K562 (cell line): ENCODE measurements at regions of chr3 and their contacts with region 1.

Region 1: GRCh38 chr3:137946345-137946973 is 63.5 kb upstream of the CLDN18 start:
- DNase-seq: peak; percentile 70 to 75 (median 71)
- ATAC-seq: peak; percentile 86
- H3K4me3 ChIP-seq: no peak overlapping the region
- H3K27ac ChIP-seq: no peak overlapping the region
- H3K4me1 ChIP-seq: no peaks in the 10 kb centered on the region
- H3K27me3 ChIP-seq: no peaks in the 10 kb centered on the region
- CTCF ChIP-seq: peak; percentile 55 to 70 (median 63); a peak in 5 of 6 replicates
- EP300 ChIP-seq: no peak
- POLR2A ChIP-seq: no peak
- RAD21 ChIP-seq: peak; percentile 59 to 74; a peak in 3 of 4 replicates

Region 2: DNA sequence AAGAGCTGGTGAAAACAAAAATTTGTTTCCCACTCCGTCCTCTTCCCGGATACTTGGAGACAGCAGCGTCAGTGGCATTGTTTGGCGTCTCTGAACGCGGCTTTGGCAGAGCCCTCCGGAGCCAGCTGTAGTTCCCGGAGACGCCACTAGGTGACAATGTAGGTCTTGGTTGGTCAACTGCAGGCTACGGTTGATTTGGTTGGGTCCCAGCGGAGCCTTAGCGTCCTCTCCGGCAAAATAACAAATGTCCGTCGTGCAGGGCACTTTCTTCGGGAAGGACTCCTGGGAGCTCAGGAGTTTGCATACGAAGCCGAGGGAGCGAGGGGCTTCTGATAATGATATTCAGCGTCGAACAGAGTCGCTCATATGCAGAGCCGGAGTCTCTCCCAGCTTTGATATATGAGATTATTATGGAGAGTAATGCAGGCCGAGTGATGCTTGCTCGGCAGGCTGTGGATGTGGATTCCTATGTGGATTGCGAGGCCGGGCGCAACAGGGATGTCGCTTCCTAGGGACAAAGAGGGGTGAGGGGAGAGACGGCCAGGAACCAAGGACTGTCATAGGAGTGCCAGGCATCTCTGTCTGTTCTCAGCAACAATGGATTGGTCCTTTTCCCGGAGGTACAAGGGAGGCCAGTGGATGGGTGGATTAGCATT is 913.9 kb before region 1 on chr3:
- CTCF ChIA-PET with region 1: no interaction called
- POLR2A ChIA-PET with region 1: no interaction called
- in situ Hi-C with region 1: no loop called
- intact Hi-C with region 1: loop called (anchors 2 kb)
- DNase-seq: peak; percentile 72 to 77 (median 75)
- ATAC-seq: peak; percentile 90
- H3K4me3 ChIP-seq: no peak overlapping the region
- H3K27ac ChIP-seq: no peak overlapping the region
- H3K4me1 ChIP-seq: peaks cover 0 to 3% of the 10 kb centered on the region in 2 experiments; a peak in 3 of 5 replicates
- H3K27me3 ChIP-seq: peaks cover 3 to 11% of the 10 kb centered on the region in 2 experiments; a peak in 3 of 5 replicates
- CTCF ChIP-seq: peak; percentile 74 to 89 (median 79)
- EP300 ChIP-seq: no peak
- POLR2A ChIP-seq: no peak
- RAD21 ChIP-seq: peak; percentile 41 to 60

Region 3: GRCh38 chr3:137105277-137105977 is 841.0 kb before region 1 on chr3:
- CTCF ChIA-PET with region 1: no interaction called
- POLR2A ChIA-PET with region 1: no interaction called
- in situ Hi-C with region 1: loop called (anchors 25 kb)
- intact Hi-C with region 1: loop called (anchors 5 kb)
- DNase-seq: peak; percentile 17 to 57 (median 20)
- ATAC-seq: peak; percentile 84
- H3K4me3 ChIP-seq: no peak overlapping the region
- H3K27ac ChIP-seq: no peak overlapping the region
- H3K4me1 ChIP-seq: no peaks in the 10 kb centered on the region
- H3K27me3 ChIP-seq: no peaks in the 10 kb centered on the region
- CTCF ChIP-seq: peak; percentile 42 to 65 (median 53); a peak in 4 of 6 replicates
- EP300 ChIP-seq: no peak
- POLR2A ChIP-seq: no peak
- RAD21 ChIP-seq: peak; percentile 42 to 66

Region 4: GRCh38 chr3:137217733-137218132 is 728.7 kb before region 1 on chr3:
- CTCF ChIA-PET with region 1: no interaction called
- POLR2A ChIA-PET with region 1: no interaction called
- in situ Hi-C with region 1: no loop called
- intact Hi-C with region 1: loop called (anchors 5 kb)
- DNase-seq: peak; percentile 15 to 19 (median 18)
- ATAC-seq: peak; percentile 69; the same call in 2 of the 3 replicates
- H3K4me3 ChIP-seq: no peak overlapping the region
- H3K27ac ChIP-seq: no peak overlapping the region
- H3K4me1 ChIP-seq: no peaks in the 10 kb centered on the region
- H3K27me3 ChIP-seq: no peaks in the 10 kb centered on the region
- CTCF ChIP-seq: peak; percentile 52 to 54 (median 52)
- EP300 ChIP-seq: no peak
- POLR2A ChIP-seq: no peak
- RAD21 ChIP-seq: peak in 1 of 2 experiments; percentile 44; a peak in 2 of 4 replicates